ENCODE measurements at regions of chr6 and their contacts with region 1.

Region 1: GRCh38 chr6:109095027-109095834 is at the start of gene CEP57L1:
- DNase-seq: peak; percentile 97
- H3K4me3 Mint-ChIP-seq: peak within 1 kb of the TSS; percentile 96
- H3K27ac Mint-ChIP-seq: peak within 1 kb of the TSS; percentile 100
- H3K4me1 Mint-ChIP-seq: peaks cover 44% of the 10 kb centered on the region
- H3K27me3 Mint-ChIP-seq: no peaks in the 10 kb centered on the region
- total RNA-seq, gene CEP57L1: 23.0 to 27.8 TPM

Region 2: GRCh38 chr6:108260809-108261569 is 834.2 kb before region 1 on chr6 and contains the start of gene SNX3:
- CTCF ChIA-PET with region 1: no interaction called
- POLR2A ChIA-PET with region 1: no interaction called
- intact Hi-C with region 1: loop called (anchors 10 kb)
- DNase-seq: peak; percentile 94
- H3K4me3 Mint-ChIP-seq: peak within 1 kb of the TSS; percentile 79
- H3K27ac Mint-ChIP-seq: peak within 1 kb of the TSS; percentile 88
- H3K4me1 Mint-ChIP-seq: peaks cover 19% of the 10 kb centered on the region
- H3K27me3 Mint-ChIP-seq: no peaks in the 10 kb centered on the region
- total RNA-seq, gene SNX3: 78.6 to 80.4 TPM

Region 3: GRCh38 chr6:109009236-109009961 is 85.8 kb before region 1 on chr6:
- CTCF ChIA-PET with region 1: no interaction called
- POLR2A ChIA-PET with region 1: interaction called, 3 read pairs
- intact Hi-C with region 1: loop called (anchors 1 kb)
- DNase-seq: peak; percentile 93
- H3K4me3 Mint-ChIP-seq: peak overlapping the region; percentile 94
- H3K27ac Mint-ChIP-seq: peak overlapping the region; percentile 92
- H3K4me1 Mint-ChIP-seq: peaks cover 60% of the 10 kb centered on the region
- H3K27me3 Mint-ChIP-seq: no peaks in the 10 kb centered on the region

Region 4: GRCh38 chr6:109373762-109374161 is 278.5 kb after region 1 on chr6:
- CTCF ChIA-PET with region 1: no interaction called
- POLR2A ChIA-PET with region 1: no interaction called
- intact Hi-C with region 1: loop called (anchors 2 kb)
- DNase-seq: peak; percentile 80
- H3K4me3 Mint-ChIP-seq: peak overlapping the region; percentile 63
- H3K27ac Mint-ChIP-seq: peak overlapping the region; percentile 99
- H3K4me1 Mint-ChIP-seq: peaks cover 75% of the 10 kb centered on the region
- H3K27me3 Mint-ChIP-seq: no peaks in the 10 kb centered on the region

Region 5: DNA sequence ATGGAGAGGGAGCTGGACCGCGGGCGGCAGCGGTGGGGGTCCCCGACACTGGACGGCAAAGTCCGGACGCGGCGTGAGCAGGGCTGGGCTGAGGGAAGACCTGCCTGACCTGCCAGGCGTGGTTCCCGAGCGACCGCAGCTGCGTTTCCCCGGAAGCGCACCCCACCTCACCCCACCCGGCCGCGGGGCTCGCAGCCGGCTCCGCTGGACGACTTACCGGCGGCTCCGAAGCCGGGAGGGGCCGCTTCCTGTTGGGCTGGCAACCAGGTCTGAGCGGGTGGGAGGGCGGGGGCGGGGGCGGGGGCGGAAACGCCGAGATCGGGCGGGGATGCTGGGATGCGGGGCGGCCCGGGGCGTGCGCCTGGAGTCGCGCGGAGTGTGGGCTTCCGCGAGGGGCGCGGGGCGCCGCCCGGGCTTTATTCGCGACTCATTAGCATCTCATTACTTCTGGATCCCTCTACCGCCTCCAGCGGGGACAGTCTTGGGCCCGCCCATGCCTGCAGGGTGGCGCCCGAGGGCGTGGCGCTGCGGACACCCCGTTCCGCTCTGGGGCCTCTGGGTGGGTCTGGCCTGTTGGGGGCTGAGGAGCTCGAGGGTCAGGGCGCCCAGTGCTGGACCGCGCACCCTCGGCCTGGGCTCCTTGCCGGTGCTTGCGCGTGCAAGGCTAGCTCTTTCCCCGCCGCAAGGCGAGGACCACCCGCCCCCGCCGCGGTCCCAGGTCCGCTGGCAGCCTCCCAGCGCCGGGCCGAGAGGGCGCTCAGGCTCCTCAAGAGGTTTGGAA is 360.5 kb after region 1 on chr6 and contains the start of gene MICAL1:
- CTCF ChIA-PET with region 1: no interaction called
- POLR2A ChIA-PET with region 1: no interaction called
- intact Hi-C with region 1: loop called (anchors 5 kb)
- DNase-seq: peak; percentile 78
- H3K4me3 Mint-ChIP-seq: peak within 1 kb of the TSS; percentile 93
- H3K27ac Mint-ChIP-seq: peak within 1 kb of the TSS; percentile 90
- H3K4me1 Mint-ChIP-seq: peaks cover 65% of the 10 kb centered on the region
- H3K27me3 Mint-ChIP-seq: no peaks in the 10 kb centered on the region
- total RNA-seq, gene MICAL1: 39.4 to 45.0 TPM

Region 6: DNA sequence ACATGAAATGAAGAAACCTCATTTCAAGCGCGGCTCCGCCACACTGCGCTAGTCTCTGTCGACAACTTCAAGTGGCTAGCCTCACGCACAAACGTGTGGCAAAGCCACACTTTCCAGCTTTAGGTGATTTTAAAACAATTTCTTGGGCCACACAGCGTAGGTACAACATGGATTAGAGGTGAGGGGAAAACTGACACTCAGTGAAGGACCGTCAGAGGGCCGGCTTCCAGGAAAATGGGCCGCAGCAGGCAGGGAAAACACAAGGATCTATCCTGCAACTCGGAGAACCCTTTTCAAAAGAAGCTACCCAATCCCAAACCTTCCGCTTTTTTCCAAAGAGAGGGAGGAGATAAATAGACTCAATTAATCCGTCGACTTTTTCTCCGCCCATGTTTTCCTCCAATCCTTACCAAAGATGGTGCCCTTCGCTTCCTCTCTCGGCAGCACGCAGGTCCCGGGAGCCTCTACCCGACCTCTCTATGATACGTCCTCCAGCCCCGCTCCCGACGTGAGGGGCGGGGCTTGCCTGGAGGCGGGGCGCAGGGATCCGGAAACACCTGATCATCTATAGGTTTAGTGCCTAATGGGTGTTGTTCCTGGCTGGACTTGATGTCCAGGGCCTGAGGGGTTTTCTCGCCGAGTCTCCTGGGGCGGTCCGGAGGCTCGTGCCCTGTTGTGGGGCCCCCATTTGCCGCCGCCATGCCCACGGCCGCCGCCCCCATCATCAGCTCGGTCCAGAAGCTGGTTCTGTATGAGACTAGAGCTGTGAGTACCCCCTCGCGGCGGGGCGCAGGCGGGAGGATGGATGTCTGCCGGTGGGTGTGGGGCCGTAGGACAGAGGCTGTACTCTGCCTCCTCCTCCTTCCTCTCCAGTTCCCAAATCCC is 595.7 kb after region 1 on chr6 and contains the starts of genes AK9 and FIG4:
- CTCF ChIA-PET with region 1: no interaction called
- POLR2A ChIA-PET with region 1: no interaction called
- intact Hi-C with region 1: loop called (anchors 2 kb)
- DNase-seq: peak; percentile 95
- H3K4me3 Mint-ChIP-seq: peak within 1 kb of the TSS; percentile 96
- H3K27ac Mint-ChIP-seq: peak within 1 kb of the TSS; percentile 89
- H3K4me1 Mint-ChIP-seq: peaks cover 30% of the 10 kb centered on the region
- H3K27me3 Mint-ChIP-seq: no peaks in the 10 kb centered on the region
- total RNA-seq, gene AK9: 2.2 to 2.8 TPM
- total RNA-seq, gene FIG4: 17.3 to 18.2 TPM